ENCODE measurements at regions of chr1 and their contacts with region 1.

Region 1: GRCh38 chr1:170664828-170665612 is 1.1 kb downstream of the PRRX1 start:
- DNase-seq: no peak
- H3K4me3 ChIP-seq: peak overlapping the region; percentile 75 to 91
- H3K27ac ChIP-seq: peak overlapping the region; percentile 99
- H3K4me1 ChIP-seq: peaks cover 19% of the 10 kb centered on the region
- H3K27me3 ChIP-seq: no peaks in the 10 kb centered on the region
- CTCF ChIP-seq: no peak
- POLR2A ChIP-seq: no peak

Region 2: GRCh38 chr1:170214117-170215032 is 450.6 kb before region 1 on chr1:
- intact Hi-C with region 1: loop called (anchors 10 kb)
- DNase-seq: no peak
- H3K4me3 ChIP-seq: no peak overlapping the region
- H3K27ac ChIP-seq: peak overlapping the region; percentile 27
- H3K4me1 ChIP-seq: peaks cover 15% of the 10 kb centered on the region
- H3K27me3 ChIP-seq: no peaks in the 10 kb centered on the region
- CTCF ChIP-seq: no peak
- POLR2A ChIP-seq: no peak

Region 3: DNA sequence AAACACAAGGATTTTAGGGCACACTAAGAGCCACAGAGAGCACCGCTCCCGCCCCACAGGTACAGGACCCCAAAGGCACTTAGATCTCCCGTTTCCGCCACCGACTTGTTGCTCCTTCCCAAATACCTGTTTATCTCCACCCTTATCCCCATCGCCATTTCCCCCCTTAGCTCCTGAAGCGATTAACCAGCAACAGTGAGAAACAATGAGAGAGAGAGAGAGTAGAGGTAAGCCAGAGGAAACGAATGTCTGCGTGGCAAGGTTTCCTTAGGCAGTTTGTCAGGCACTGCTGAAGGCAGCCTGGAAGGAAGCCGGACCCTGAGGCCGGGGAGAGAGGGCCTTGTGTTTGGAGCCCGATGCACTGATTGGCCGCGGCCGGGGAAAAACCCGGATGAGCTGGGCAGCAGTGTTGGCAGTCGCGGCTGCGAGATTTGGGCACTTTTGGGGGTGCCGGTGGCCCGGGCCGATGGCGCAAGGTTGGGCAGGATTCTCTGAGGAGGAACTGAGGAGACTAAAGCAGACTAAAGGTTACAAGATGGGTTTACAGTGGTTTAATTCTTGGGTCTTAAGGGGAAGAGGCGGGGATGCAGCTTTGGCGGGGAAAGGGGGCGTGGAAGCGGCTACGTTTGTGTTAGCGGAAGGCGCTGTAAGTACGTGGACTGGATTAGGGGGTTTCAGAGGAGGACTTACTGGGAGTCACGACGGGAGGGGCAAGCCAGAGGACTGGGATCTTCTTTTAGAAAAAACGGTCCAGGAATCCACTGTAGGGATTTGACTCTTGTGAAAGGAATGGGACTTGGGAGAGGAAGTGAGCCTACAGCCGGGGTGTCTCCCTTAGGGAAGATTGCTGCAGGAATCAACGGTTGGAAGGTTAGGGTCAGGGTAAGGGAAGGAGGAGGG is 133.0 kb before region 1 on chr1 and contains the start of gene GORAB:
- intact Hi-C with region 1: loop called (anchors 5 kb)
- DNase-seq: peak in 1 of 2 donors; percentile 95
- H3K4me3 ChIP-seq: peak within 1 kb of the TSS; percentile 60 to 61
- H3K27ac ChIP-seq: peak within 1 kb of the TSS; percentile 92
- H3K4me1 ChIP-seq: peaks cover 38% of the 10 kb centered on the region
- H3K27me3 ChIP-seq: no peaks in the 10 kb centered on the region
- CTCF ChIP-seq: no peak
- POLR2A ChIP-seq: peak in 1 of 2 donors; percentile 54
- total RNA-seq, gene GORAB: 11.3 TPM

Region 4: GRCh38 chr1:170986901-170987300 is 321.9 kb after region 1 on chr1:
- intact Hi-C with region 1: no loop called
- DNase-seq: no peak
- H3K4me3 ChIP-seq: no peak overlapping the region
- H3K27ac ChIP-seq: no peak overlapping the region
- H3K4me1 ChIP-seq: no peaks in the 10 kb centered on the region
- H3K27me3 ChIP-seq: no peaks in the 10 kb centered on the region
- CTCF ChIP-seq: no peak
- POLR2A ChIP-seq: no peak

Region 5: GRCh38 chr1:172429331-172430127 is 1764.5 kb after region 1 on chr1:
- intact Hi-C with region 1: no loop called
- DNase-seq: no peak
- H3K4me3 ChIP-seq: no peak overlapping the region
- H3K27ac ChIP-seq: no peak overlapping the region
- H3K4me1 ChIP-seq: peaks cover 19% of the 10 kb centered on the region
- H3K27me3 ChIP-seq: no peaks in the 10 kb centered on the region
- CTCF ChIP-seq: peak; percentile 43 to 64 (median 63)
- POLR2A ChIP-seq: no peak

Measured in vagina (tissue), 2 donors.